ENCODE measurements at regions of chr4 and their contacts with region 1.

Region 1: GRCh38 chr4:78775303-78776030 is 683 bp upstream of the BMP2K start:
- DNase-seq: peak; percentile 86
- H3K4me3 Mint-ChIP-seq: peak overlapping the region; percentile 95
- H3K27ac Mint-ChIP-seq: peak overlapping the region; percentile 96
- H3K4me1 Mint-ChIP-seq: peaks cover 38% of the 10 kb centered on the region
- H3K27me3 Mint-ChIP-seq: no peaks in the 10 kb centered on the region

Region 2: GRCh38 chr4:77862478-77863216 is 912.8 kb before region 1 on chr4 and contains the start of gene MRPL1:
- intact Hi-C with region 1: loop called (anchors 2 kb)
- DNase-seq: peak; percentile 84
- H3K4me3 Mint-ChIP-seq: peak within 1 kb of the TSS; percentile 90
- H3K27ac Mint-ChIP-seq: peak within 1 kb of the TSS; percentile 94
- H3K4me1 Mint-ChIP-seq: peaks cover 48% of the 10 kb centered on the region
- H3K27me3 Mint-ChIP-seq: no peaks in the 10 kb centered on the region
- total RNA-seq, gene MRPL1: 72.7 and 75.0 TPM in 2 replicates

Region 3: DNA sequence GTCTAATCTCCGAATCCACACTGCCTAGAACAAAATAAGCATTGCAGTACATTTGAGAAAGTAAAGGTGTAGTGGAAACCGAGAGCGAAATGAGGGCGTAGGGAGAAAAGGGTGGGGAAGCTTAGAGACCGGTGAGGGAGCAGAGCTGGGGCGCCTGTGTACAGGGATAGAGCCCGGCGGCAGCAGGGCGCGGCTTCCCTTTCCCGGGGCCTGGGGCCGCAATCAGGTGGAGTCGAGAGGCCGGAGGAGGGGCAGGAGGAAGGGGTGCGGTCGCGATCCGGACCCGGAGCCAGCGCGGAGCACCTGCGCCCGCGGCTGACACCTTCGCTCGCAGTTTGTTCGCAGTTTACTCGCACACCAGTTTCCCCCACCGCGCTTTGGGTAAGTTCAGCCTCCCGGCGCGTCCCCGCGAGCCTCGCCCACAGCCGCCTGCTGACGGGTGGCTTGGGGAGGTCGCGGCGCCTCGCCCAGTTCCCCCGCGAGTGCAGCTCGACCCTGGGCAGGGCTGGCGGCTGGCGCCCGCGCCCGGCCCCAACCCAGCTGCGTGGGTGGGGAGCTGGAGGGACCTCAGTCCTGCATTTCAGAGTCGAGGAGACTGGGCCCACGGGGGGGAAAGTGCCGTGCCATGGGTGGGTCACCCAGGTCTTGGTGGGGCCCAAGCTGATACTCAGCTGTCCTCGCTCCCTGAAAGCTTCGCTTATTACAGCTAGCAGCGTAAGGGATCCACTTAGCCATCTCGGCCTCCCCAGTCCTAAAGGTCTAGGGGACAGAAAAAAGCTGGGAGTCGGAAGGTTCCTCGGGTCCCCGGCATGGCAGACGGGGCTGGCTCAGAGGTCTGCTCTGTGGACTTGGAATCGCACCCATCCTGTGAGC is 223.8 kb before region 1 on chr4 and contains the start of gene ANXA3:
- intact Hi-C with region 1: loop called (anchors 2 kb)
- DNase-seq: peak; percentile 25
- H3K4me3 Mint-ChIP-seq: peak within 1 kb of the TSS; percentile 90
- H3K27ac Mint-ChIP-seq: peak within 1 kb of the TSS; percentile 73
- H3K4me1 Mint-ChIP-seq: peaks cover 29% of the 10 kb centered on the region
- H3K27me3 Mint-ChIP-seq: peaks cover 18% of the 10 kb centered on the region
- total RNA-seq, gene ANXA3: 8.1 and 9.2 TPM in 2 replicates

Region 4: GRCh38 chr4:78720994-78721677 is 54.3 kb before region 1 on chr4:
- intact Hi-C with region 1: loop called (anchors 2 kb)
- DNase-seq: peak; percentile 4
- H3K4me3 Mint-ChIP-seq: peak overlapping the region; percentile 66
- H3K27ac Mint-ChIP-seq: peak overlapping the region; percentile 71
- H3K4me1 Mint-ChIP-seq: peaks cover 20% of the 10 kb centered on the region
- H3K27me3 Mint-ChIP-seq: no peaks in the 10 kb centered on the region

Region 5: GRCh38 chr4:78864405-78865024 is 89.0 kb after region 1 on chr4:
- intact Hi-C with region 1: loop called (anchors 1 kb)
- DNase-seq: peak; percentile 12
- H3K4me3 Mint-ChIP-seq: no peak overlapping the region
- H3K27ac Mint-ChIP-seq: no peak overlapping the region
- H3K4me1 Mint-ChIP-seq: peaks cover 15% of the 10 kb centered on the region
- H3K27me3 Mint-ChIP-seq: no peaks in the 10 kb centered on the region

Region 6: DNA sequence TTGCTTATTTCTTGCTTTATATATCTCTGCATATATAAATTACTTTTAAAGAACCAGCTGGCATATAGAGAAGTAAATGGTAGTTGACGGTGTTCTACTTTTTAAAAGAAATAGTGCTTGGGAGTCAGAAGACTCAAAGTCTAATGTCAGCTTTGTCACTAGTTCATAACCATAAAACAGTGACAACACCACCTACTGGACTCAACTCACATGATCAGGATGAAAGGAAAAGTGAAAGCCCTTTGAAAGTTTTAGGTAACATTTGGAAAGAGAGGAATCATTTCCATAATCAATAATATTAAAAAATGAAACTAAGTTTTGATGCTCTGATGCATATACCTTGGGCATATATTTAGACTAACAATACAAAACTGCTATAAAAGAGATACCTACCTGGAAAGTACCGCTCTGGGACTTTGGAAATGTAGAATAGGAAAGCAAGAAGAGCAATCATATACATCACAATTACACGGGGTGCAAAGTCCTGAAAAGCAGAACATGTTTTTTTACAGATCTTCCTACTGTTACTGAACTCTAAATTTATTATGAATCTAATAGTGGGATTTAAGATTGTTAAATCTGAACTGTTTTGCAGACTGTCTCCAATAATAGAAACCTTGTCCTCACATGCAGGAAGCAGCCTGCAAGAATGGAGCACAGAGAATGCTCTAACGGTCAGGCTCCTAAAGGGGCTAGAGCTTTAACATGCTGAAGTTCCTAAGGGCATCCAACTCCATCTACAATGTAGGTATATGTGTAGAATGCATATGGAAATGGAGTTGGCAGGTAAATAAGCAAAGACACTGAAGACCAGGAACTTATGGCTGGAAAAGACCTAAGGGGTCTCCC is 148.2 kb after region 1 on chr4:
- intact Hi-C with region 1: no loop called
- DNase-seq: no peak
- H3K4me3 Mint-ChIP-seq: no peak overlapping the region
- H3K27ac Mint-ChIP-seq: no peak overlapping the region
- H3K4me1 Mint-ChIP-seq: peaks cover 16% of the 10 kb centered on the region
- H3K27me3 Mint-ChIP-seq: no peaks in the 10 kb centered on the region

Region 7: DNA sequence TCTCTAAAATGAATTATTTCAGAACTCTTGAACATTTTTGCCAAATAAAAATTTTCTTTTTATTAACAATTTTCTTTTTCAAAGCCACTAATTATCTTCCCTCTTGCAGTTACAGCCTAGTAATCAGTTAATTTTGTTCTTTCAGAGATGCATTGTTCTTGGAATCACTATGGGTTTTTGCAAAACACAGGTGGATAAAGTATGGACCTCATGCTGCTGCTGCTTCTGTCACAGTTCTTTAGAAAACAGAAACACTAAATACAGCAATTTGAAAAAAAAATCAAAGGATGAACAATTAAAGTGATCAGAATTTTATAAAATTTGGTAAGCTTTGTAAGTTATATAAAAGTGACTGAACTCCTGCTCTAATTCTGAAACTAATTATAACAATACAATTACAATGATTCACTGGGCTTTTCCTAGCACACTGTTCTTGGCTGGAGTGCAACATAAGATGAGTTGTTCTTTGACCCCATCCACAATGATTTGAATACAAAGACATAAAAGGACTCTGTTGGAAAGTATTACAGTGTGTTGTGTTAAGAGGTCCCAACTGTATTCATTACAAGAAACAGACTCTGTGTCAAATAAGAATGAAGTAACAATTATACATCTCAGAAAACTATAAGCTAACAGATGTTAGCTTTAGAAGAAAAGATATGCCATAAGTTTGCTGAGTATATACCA is 691.9 kb after region 1 on chr4:
- intact Hi-C with region 1: no loop called
- DNase-seq: no peak
- H3K4me3 Mint-ChIP-seq: no peak overlapping the region
- H3K27ac Mint-ChIP-seq: no peak overlapping the region
- H3K4me1 Mint-ChIP-seq: no peaks in the 10 kb centered on the region
- H3K27me3 Mint-ChIP-seq: no peaks in the 10 kb centered on the region

Measured in activated T-helper 1 cell treated with anti-CD3 and anti-CD28 coated beads, Interleukin-12 subunit alpha, Interleukin-12 subunit beta, Interleukin-2, Interleukin-4 antibody, amounts not matched to agents 30 ng/mL and 10 ng/mL and 1 ng/mL, durations not matched to agents 14 hours and 24 hours and 36 hours (primary cell).